ENCODE measurements at regions of chr7 and their contacts with region 1.

Region 1: GRCh38 chr7:76314042-76314721 is 11.7 kb downstream of the HSPB1 start:
- DNase-seq: peak; percentile 96 to 98 (median 96)
- ATAC-seq: peak; percentile 48 to 75 (median 66)
- H3K4me3 ChIP-seq: no peak overlapping the region
- H3K27ac ChIP-seq: peak overlapping the region in 3 of 12 donors; percentile 43 to 47 (median 46)
- H3K4me1 ChIP-seq: peaks cover 0 to 29% (median 15%) of the 10 kb centered on the region in 12 donors
- H3K27me3 ChIP-seq: no peaks in the 10 kb centered on the region
- CTCF ChIP-seq: peak; percentile 99 to 100 (median 100)
- POLR2A ChIP-seq: peak in 1 of 2 donors; percentile 49

Region 2: DNA sequence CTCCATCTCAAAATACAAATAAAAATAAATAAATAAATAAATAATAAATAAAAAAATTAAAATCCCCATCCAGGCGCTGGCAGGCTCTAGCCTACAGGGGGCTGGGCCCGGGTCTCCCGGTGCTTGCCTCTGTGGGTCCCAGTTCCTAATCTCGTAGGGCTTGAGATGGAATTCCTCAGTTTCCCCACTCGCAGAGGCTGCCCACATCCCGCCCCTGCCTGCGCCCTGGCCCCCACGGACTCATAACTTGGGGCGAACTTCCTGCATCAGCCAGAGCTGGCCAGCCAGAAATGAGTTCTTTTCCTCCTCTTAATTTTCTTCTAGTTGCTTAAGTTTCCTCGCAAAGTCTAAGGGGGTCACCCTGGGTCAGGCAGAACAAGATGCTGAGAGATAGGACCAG is 134.5 kb before region 1 on chr7:
- intact Hi-C with region 1: loop called (anchors 1 to 2 kb)
- DNase-seq: peak in 1 of 5 donors; percentile 20
- ATAC-seq: no peak
- H3K4me3 ChIP-seq: no peak overlapping the region
- H3K27ac ChIP-seq: no peak overlapping the region
- H3K4me1 ChIP-seq: peaks cover 0 to 8% (median 0%) of the 10 kb centered on the region in 12 donors
- H3K27me3 ChIP-seq: no peaks in the 10 kb centered on the region
- CTCF ChIP-seq: no peak
- POLR2A ChIP-seq: no peak